ENCODE measurements at regions of chr9 and their contacts with region 1.

Region 1: DNA sequence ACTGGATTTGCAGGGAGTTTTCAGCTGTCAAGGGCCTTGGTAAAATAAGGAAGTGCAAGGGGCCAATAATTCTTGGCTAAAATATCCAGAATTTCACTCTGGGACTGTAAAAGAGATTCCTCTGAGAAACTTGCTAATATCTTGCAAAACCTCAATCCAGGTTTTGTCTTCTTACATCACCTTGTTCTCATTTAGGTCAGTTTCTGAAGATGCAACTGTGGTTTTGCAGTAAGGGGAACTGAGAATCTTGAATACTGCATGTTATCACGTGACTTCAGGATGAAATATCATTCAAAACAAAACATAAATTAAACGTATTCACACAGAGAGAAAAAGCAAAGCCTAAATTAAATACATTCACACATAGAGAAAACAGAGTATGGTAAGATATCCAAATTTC is 35.0 kb upstream of the RIC1 start:
- ATAC-seq: no peak
- H3K4me3 ChIP-seq: no peak overlapping the region
- H3K27ac ChIP-seq: no peak overlapping the region
- H3K4me1 ChIP-seq: peaks cover 0 to 5% of the 10 kb centered on the region in 2 donors

Region 2: DNA sequence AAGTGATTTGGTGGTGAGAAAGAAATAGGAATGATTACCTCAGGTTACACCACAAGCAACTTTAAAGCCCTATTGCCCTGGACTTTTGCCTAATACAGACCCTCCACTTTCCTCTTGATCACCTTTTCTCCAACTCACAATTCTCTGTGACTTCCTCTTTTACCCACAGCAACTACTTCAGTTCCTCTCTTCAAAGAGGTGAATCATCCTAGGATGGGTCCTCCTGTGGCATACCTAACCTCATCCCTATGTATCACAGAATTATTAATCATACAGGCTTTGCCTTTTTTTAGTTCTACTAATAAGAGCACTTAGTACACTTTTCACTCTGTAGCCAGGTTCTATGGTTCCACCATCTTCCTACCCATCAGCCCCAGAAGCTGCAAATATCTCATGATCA is 388.8 kb before region 1 on chr9:
- in situ Hi-C with region 1: loop called in 1 of 9 experiments (anchors 10 kb)
- ATAC-seq: no peak
- H3K4me3 ChIP-seq: no peak overlapping the region
- H3K27ac ChIP-seq: no peak overlapping the region
- H3K4me1 ChIP-seq: no peaks in the 10 kb centered on the region

Region 3: DNA sequence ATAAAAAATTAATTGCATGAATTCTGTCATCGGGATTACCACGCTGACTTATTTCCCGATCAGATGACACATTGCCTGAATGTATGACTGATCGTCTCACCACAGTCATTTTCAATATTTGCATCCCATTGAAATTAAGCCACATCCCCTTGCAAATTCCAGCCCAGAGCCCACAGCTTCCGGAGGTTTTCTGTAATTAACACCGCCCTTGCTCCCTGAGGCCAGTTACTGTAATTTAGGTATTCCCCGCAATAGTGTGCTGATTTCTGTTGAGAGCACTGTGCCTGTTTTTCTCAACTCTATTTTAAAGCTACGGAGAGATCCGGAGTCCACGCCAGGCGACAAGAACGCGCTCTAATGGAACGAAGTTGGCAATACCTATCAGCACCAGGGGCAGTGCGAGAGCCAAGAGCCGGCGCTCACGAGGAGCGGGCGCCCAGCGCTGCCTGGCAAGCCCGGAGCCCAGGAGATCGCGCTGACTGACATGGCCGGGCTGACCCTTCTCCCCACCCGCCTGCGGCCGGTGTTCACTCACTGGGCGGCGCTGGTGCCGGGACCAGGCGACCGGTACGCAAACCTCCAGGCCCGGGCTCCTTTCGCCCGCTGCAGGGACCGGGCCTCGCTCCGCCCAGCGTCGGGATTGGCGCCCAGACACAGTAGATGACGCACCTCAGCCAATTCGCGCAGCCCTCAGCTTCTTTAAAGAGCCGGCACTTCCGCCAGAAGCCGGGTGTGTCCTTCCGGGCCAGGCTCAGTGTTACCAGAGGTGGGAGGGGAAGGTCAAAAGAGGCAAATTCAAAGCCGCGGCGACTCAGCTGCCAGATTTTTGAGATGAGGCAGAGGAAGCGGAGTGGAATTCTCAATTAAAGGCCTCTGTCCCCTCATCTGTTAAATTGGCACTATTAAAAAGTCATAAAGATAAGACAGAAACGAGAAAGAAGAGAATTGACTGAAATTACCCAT is 156.4 kb before region 1 on chr9 and contains the start of gene PLGRKT:
- in situ Hi-C with region 1: loop called in 1 of 9 experiments (anchors 10 kb)
- ATAC-seq: peak; percentile 85 to 99 (median 98)
- H3K4me3 ChIP-seq: peak within 1 kb of the TSS; percentile 48 to 84 (median 53)
- H3K27ac ChIP-seq: peak within 1 kb of the TSS; percentile 50 to 78
- H3K4me1 ChIP-seq: peaks cover 11 to 13% of the 10 kb centered on the region in 2 donors
- total RNA-seq, gene PLGRKT: 21.5 to 32.0 (median 26.1) TPM

Region 4: DNA sequence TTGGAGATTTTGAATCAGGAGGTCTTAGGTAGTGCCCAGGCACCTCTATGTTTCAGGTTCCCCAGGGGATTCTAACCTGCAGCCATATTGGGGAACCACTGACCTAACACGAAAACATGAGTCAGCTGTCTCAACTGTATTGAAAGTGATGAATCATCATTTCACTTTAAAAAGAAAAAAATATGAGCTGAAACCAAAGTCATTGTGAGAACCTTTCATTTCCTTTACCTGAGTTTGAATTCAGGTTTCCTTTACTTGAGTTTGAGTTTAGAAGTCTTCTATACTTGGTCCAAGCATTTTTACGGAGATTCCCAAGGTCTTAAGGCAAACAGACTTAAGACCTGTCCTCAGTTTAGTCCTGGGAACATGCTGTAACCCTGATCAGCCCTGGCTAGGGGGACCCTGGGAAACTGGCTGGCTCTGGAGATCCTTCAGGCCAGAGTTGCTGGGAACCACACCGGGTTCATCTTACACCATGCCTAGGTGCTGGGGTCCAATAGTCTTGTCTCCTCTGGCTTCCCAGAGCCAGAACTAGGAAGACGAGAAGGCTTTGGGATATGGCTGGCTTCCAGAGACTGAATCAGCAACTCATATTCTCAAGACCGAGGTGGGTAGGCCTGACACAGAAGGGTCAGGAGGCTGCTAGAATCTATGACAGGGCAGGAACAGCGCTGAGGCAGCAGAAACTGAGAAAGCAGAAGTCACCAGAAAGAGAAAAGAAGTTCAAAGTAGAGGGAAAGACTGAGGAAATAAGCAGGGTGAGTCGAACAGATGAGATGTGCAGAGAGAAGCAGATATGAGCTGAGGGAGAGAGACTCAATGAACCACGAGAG is 100.0 kb before region 1 on chr9:
- in situ Hi-C with region 1: no loop called
- ATAC-seq: peak in 2 of 8 experiments; percentile 72 to 88
- H3K4me3 ChIP-seq: no peak overlapping the region
- H3K27ac ChIP-seq: no peak overlapping the region
- H3K4me1 ChIP-seq: no peaks in the 10 kb centered on the region